ENCODE measurements at regions of chr1 and their contacts with region 1.

Region 1: DNA sequence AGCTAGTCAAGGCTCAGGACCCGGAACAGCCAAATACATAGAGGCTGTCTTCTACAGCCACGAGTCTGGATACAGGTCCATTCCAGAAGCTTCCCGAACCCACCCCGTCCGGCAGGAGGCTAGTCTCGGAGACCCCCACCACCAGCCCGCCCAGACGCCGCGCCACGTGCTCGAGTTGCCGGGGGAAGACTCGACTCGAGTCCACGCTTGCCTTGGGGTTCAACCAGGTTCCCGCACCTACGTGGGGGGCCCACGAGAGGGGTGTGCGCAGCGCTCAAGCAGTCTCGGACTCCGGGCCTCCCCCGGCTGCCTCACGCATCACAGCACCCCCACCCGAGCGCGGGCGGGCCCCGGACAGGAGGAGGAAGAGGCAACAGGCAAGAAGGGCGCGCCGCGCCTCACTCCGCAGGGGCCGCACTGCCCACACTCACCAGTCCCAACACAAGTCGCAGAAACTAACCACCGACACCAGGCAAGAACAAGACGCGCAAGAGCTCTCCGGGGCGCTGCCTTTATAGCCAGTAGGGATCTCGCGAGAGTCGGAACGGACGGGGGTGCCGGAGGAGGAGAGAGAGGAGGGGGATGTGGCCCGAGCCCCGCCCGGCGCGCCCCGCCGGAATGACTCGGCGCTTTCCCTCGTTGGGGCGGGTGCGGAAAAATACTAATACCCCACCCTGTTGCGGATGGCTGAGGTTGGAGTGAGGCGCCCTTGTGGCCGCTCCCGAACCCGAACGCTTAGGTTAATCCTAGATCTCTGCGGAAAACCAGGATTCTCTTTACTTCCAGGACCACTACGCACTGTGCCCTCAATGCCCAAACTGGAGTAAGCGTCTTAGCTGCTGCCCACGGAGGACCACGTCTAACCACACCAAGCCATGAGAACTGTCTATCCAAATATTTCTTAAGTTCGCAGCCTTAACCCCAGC is at the start of gene PRDX1:
- H3K4me3 ChIP-seq: peak within 1 kb of the TSS; percentile 96
- H3K27ac ChIP-seq: peak within 1 kb of the TSS; percentile 63
- H3K4me1 ChIP-seq: 0 out of 2 replicates have a peak, but pooled peaks cover 3% of the 10 kb centered on the region
- CTCF ChIP-seq: peak; percentile 75

Region 2: GRCh38 chr1:45339789-45340570 is 181.7 kb before region 1 on chr1 and contains the starts of genes MUTYH and TOE1:
- CTCF ChIA-PET with region 1: no interaction called
- POLR2A ChIA-PET with region 1: interaction called, 24 read pairs
- H3K4me3 ChIP-seq: peak within 1 kb of the TSS; percentile 67
- H3K27ac ChIP-seq: peak within 1 kb of the TSS; percentile 75
- H3K4me1 ChIP-seq: no peaks in the 10 kb centered on the region
- CTCF ChIP-seq: no peak

Region 3: DNA sequence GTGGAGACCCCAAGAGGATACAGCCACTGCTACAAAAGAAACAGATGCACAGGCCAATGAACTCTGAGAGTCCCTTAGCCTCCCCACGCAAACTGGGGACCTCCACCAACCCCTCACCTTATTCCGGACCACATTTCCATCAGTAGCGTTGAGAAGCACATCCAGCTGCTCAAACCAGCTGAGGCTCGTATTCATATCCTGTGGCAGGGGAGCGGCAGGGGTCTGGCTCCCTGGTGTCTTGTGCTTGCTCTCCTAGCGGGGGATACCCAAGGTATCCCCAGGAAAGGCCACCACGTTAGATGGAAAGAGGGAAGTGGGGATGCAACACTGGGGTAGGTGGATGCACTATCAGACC is 22.3 kb before region 1 on chr1:
- CTCF ChIA-PET with region 1: no interaction called
- POLR2A ChIA-PET with region 1: interaction called, 86 read pairs
- H3K4me3 ChIP-seq: peak overlapping the region; percentile 56
- H3K27ac ChIP-seq: no peak overlapping the region; the same call in 1 of the 2 replicates
- H3K4me1 ChIP-seq: no peaks in the 10 kb centered on the region
- CTCF ChIP-seq: no peak

Region 4: DNA sequence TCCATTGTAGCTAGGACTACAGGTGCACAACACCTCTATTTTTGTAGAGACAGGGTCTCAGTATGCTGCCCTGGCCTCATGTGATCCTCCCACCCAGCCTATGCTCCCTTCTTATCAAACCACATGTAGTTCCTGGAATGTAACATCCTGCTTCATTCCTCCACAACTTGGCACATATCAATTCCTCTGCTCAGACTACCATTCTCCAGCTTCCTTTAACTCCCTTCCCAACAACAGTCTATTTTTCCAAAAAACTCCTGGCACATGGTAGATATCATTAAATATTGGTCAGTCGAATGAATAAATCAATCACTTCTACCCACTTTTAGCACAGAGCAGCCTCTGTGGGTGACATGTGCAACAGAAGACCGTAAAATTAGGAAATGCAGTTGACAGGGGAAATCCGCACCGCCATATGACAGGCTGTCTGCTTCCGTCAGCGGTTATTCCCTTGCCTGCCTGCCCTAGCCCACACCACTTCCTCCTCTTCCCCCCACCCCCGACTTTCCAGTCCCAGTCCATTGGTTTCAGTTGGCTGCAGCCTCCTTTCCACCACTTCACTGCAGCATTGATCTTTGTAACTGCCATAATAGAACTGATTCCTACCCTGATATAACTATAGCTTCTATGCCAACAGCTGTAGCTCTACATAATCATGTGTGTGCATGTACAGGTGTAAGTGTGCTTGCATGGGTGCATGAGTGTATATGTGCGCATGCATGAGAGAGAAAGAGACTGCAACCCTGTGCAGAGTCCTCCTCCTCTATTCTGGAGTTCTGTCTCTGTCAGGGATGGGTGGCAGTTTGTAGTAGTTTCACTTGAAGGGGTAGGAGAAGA is 22.1 kb after region 1 on chr1:
- CTCF ChIA-PET with region 1: interaction called, 4 read pairs
- POLR2A ChIA-PET with region 1: interaction called, 50 read pairs
- H3K4me3 ChIP-seq: no peak overlapping the region
- H3K27ac ChIP-seq: no peak overlapping the region
- H3K4me1 ChIP-seq: no peaks in the 10 kb centered on the region
- CTCF ChIP-seq: no peak

Region 5: GRCh38 chr1:45557422-45557944 is 35.8 kb after region 1 on chr1:
- CTCF ChIA-PET with region 1: no interaction called
- POLR2A ChIA-PET with region 1: interaction called, 66 read pairs
- H3K4me3 ChIP-seq: no peak overlapping the region
- H3K27ac ChIP-seq: peak overlapping the region; percentile 46; the same call in 1 of the 2 replicates
- H3K4me1 ChIP-seq: peaks cover 4% of the 10 kb centered on the region
- CTCF ChIP-seq: no peak

Region 6: GRCh38 chr1:45583264-45583665 is 61.6 kb after region 1 on chr1:
- CTCF ChIA-PET with region 1: interaction called, 4 read pairs
- POLR2A ChIA-PET with region 1: interaction called, 56 read pairs
- H3K4me3 ChIP-seq: peak overlapping the region; percentile 79
- H3K27ac ChIP-seq: peak overlapping the region; percentile 90; the same call in 1 of the 2 replicates
- H3K4me1 ChIP-seq: no peaks in the 10 kb centered on the region
- CTCF ChIP-seq: no peak

Measured in HEK293 (cell line).